Activated CD8-positive, alpha-beta T cell treated with anti-CD3 and anti-CD28 coated beads for 36 hours (primary cell): ENCODE measurements at regions of chr1 and their contacts with region 1.

Region 1: GRCh38 chr1:88877382-88877825 is 14.0 kb downstream of the GTF2B start:
- DNase-seq: no peak
- ATAC-seq: no peak
- H3K4me3 Mint-ChIP-seq: no peak overlapping the region
- H3K27ac Mint-ChIP-seq: no peak overlapping the region
- H3K4me1 Mint-ChIP-seq: peaks cover 49% of the 10 kb centered on the region
- H3K27me3 Mint-ChIP-seq: no peaks in the 10 kb centered on the region
- CTCF ChIP-seq: peak; percentile 85

Region 2: GRCh38 chr1:88608139-88608943 is 269.1 kb before region 1 on chr1:
- CTCF ChIA-PET with region 1: no interaction called
- POLR2A ChIA-PET with region 1: no interaction called
- intact Hi-C with region 1: no loop called
- DNase-seq: peak; percentile 8
- ATAC-seq: peak; percentile 87
- H3K4me3 Mint-ChIP-seq: no peak overlapping the region
- H3K27ac Mint-ChIP-seq: no peak overlapping the region
- H3K4me1 Mint-ChIP-seq: no peaks in the 10 kb centered on the region
- H3K27me3 Mint-ChIP-seq: peaks cover 2% of the 10 kb centered on the region
- CTCF ChIP-seq: peak; percentile 72

Region 3: GRCh38 chr1:88655685-88656299 is 221.6 kb before region 1 on chr1:
- CTCF ChIA-PET with region 1: interaction called, 9 read pairs
- POLR2A ChIA-PET with region 1: no interaction called
- intact Hi-C with region 1: loop called (anchors 5 kb)
- DNase-seq: no peak
- ATAC-seq: no peak
- H3K4me3 Mint-ChIP-seq: no peak overlapping the region
- H3K27ac Mint-ChIP-seq: no peak overlapping the region
- H3K4me1 Mint-ChIP-seq: peaks cover 10% of the 10 kb centered on the region
- H3K27me3 Mint-ChIP-seq: no peaks in the 10 kb centered on the region
- CTCF ChIP-seq: peak; percentile 80

Region 4: DNA sequence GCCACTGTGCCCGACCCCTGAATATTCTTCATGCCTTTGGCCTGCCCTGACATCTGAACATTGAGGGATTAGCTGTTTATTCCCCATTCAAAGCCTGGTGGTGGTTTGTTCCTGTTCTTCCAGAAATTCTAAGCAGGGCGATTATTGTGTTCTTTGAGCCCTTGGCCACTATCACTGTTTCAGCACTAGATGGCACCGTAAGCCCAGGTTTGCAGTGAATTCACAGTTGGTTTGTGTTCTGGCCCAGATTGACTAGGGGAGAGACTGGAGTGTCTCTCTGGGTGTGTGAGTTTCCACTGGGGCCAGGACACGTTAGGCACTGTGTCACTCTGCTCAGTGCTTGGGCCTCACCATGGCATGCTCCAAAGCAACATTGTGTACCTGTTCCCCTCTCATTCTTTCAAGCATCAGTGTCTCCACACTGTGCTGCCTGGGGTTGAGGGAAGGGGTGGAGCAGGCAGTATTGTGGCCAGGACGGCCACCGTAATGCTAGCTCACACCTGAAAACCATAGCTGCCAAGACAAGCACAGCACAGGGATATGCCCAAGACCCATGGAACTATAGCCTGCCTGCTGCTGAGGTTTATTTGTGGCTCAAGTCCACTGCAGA is 140.7 kb before region 1 on chr1:
- CTCF ChIA-PET with region 1: interaction called, 11 read pairs
- POLR2A ChIA-PET with region 1: interaction called, 3 read pairs
- intact Hi-C with region 1: no loop called
- DNase-seq: peak; percentile 17
- ATAC-seq: peak; percentile 64
- H3K4me3 Mint-ChIP-seq: no peak overlapping the region
- H3K27ac Mint-ChIP-seq: no peak overlapping the region
- H3K4me1 Mint-ChIP-seq: peaks cover 9% of the 10 kb centered on the region
- H3K27me3 Mint-ChIP-seq: no peaks in the 10 kb centered on the region
- CTCF ChIP-seq: peak; percentile 58

Region 5: DNA sequence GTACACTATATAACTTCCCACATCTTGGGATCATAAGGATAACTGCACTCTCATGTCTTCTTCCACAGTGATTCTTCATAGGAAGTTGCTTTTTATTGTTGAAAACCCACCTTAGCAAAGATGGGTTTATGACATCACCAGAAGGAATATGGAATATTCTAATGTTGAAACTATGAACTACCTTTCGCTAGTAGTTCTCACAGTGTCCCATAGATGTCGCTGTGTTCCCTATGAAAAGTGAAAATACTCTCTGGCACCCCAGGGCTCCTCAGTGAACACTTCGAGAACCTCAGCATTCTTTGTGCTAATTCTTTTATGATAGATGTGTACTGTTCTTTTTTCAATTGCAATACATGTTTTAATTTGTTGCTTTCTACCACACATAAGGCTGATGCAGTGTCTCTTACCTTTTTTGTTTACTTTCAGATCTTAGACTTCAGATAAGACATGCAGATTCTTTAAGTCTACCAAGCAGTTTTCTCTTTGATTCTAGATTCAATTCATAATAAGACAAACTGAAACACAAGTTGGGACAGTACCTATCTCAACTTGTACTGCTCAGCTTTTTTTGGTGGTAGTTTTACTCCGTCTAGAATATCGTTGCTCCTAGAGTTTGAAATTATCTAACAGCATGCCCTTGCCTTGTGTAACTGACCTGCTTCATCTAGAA is 76.9 kb before region 1 on chr1:
- CTCF ChIA-PET with region 1: interaction called, 17 read pairs
- POLR2A ChIA-PET with region 1: no interaction called
- intact Hi-C with region 1: loop called (anchors 5 kb)
- DNase-seq: peak; percentile 56
- ATAC-seq: peak; percentile 93
- H3K4me3 Mint-ChIP-seq: no peak overlapping the region
- H3K27ac Mint-ChIP-seq: peak overlapping the region; percentile 31
- H3K4me1 Mint-ChIP-seq: peaks cover 9% of the 10 kb centered on the region
- H3K27me3 Mint-ChIP-seq: no peaks in the 10 kb centered on the region
- CTCF ChIP-seq: peak; percentile 88

Region 6: DNA sequence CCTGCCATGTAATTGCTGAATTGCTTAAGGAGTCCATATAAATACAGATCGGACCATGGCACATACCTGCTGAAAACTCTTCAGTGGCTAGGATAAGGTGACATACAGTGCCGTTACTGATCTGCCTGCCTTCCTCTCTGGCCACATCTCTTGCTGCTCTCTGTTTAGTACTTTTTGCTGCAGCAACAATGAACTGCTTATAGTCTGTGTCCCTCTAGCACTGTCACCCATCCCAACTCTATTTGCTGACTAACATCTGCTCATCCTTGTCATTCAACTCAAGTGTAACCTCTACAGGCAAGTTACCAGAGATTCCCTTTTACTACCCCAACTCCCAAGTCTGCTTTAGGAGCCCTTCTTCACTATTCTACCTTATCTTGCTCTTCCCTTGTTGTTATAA is 51.7 kb before region 1 on chr1:
- CTCF ChIA-PET with region 1: interaction called, 10 read pairs
- POLR2A ChIA-PET with region 1: no interaction called
- intact Hi-C with region 1: no loop called
- DNase-seq: no peak
- ATAC-seq: no peak
- H3K4me3 Mint-ChIP-seq: no peak overlapping the region
- H3K27ac Mint-ChIP-seq: no peak overlapping the region
- H3K4me1 Mint-ChIP-seq: no peaks in the 10 kb centered on the region
- H3K27me3 Mint-ChIP-seq: no peaks in the 10 kb centered on the region
- CTCF ChIP-seq: no peak

Region 7: DNA sequence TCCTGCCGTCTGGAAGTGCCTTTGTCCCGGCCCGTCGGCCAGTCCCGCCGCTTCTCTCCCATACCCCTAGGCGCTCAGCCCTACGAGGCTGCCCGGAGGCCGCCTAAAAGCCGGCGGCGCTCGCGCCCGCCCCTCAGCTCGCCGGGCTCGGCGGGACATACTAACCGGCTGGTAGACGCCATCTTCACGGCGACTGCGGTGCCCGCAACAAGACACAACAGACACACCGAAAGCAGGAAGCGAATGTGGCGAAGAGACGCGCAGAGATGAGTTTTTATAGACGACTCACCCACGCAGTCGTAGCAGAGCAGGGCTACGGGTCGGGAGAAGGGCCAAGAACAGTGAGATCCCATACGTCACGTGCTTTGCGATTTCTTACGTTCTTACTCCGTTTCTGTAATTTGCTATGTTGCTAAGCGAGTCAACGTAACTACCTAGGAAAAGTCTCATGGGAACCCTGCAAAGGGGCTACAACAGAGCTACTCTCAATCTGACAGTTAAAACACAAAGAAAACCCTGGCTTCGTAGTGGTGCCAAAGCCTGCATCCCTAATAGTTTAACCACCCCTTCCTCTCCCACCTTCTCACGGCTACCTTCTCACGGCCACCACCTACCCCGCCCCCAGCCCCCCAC is 14.0 kb after region 1 on chr1 and contains the start of gene GTF2B:
- CTCF ChIA-PET with region 1: interaction called, 93 read pairs
- POLR2A ChIA-PET with region 1: interaction called, 10 read pairs
- intact Hi-C with region 1: no loop called
- DNase-seq: peak; percentile 97
- ATAC-seq: peak; percentile 89
- H3K4me3 Mint-ChIP-seq: peak within 1 kb of the TSS; percentile 81
- H3K27ac Mint-ChIP-seq: peak within 1 kb of the TSS; percentile 96
- H3K4me1 Mint-ChIP-seq: peaks cover 38% of the 10 kb centered on the region
- H3K27me3 Mint-ChIP-seq: no peaks in the 10 kb centered on the region
- CTCF ChIP-seq: no peak
- total RNA-seq, gene GTF2B: 40.7 to 42.0 TPM